CD8-positive, alpha-beta T cell (primary cell): ENCODE measurements at regions of chr19 and their contacts with region 1.

Region 1: GRCh38 chr19:10644260-10645007 is 9.7 kb upstream of the ILF3 start:
- DNase-seq: peak; percentile 76 to 92 (median 87)
- ATAC-seq: peak; percentile 90
- H3K4me3 ChIP-seq: no peak overlapping the region
- H3K4me3 Mint-ChIP-seq: peak overlapping the region; percentile 22
- H3K27ac ChIP-seq: peak overlapping the region in 1 of 2 experiments; percentile 65
- H3K27ac Mint-ChIP-seq: peak overlapping the region; percentile 92
- H3K4me1 ChIP-seq: peaks cover 39% of the 10 kb centered on the region
- H3K4me1 Mint-ChIP-seq: peaks cover 43% of the 10 kb centered on the region
- H3K27me3 ChIP-seq: no peaks in the 10 kb centered on the region
- H3K27me3 Mint-ChIP-seq: no peaks in the 10 kb centered on the region
- CTCF ChIP-seq: peak; percentile 84

Region 2: DNA sequence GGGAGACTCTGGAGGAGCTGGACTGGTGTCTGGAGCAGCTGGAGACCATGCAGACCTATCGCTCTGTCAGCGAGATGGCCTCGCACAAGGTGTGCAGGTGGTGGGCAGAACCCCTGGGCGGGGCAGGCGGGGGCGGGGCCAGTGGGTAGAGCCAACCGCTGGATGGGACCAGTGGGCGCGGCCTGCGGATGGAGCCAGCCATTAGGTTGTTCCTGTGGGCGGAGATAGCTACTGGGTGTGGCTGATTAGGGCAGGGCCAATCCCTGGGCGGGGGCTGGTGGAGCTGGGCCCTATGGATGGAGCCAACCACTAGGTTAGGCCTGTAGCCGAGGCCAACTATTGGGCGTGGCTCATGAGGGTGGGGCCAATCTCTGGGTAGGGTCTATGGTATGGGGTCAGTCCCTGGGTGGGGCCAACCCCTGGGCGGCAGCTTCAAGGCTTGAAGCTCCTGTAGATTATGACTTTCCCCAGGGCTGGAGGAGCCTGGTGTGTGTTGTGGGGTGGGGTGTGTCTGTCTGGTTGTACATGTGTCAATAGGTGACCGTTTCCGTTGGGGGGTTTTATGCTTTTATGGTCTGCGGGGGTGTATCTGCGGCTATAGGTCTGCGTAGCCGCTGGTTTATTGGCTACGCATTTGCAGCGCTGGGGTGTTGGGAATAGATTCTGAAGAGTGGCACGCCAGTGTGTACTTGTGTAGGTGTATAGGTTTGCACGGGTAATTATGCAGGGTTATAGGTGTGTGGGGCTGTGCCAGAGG is 193.4 kb before region 1 on chr19:
- CTCF ChIA-PET with region 1: no interaction called
- POLR2A ChIA-PET with region 1: no interaction called
- intact Hi-C with region 1: no loop called
- DNase-seq: no peak
- ATAC-seq: no peak
- H3K4me3 ChIP-seq: no peak overlapping the region
- H3K4me3 Mint-ChIP-seq: no peak overlapping the region
- H3K27ac ChIP-seq: no peak overlapping the region
- H3K27ac Mint-ChIP-seq: no peak overlapping the region
- H3K4me1 ChIP-seq: no peaks in the 10 kb centered on the region
- H3K4me1 Mint-ChIP-seq: no peaks in the 10 kb centered on the region
- H3K27me3 ChIP-seq: no peaks in the 10 kb centered on the region
- H3K27me3 Mint-ChIP-seq: peaks cover 4% of the 10 kb centered on the region
- CTCF ChIP-seq: no peak

Region 3: DNA sequence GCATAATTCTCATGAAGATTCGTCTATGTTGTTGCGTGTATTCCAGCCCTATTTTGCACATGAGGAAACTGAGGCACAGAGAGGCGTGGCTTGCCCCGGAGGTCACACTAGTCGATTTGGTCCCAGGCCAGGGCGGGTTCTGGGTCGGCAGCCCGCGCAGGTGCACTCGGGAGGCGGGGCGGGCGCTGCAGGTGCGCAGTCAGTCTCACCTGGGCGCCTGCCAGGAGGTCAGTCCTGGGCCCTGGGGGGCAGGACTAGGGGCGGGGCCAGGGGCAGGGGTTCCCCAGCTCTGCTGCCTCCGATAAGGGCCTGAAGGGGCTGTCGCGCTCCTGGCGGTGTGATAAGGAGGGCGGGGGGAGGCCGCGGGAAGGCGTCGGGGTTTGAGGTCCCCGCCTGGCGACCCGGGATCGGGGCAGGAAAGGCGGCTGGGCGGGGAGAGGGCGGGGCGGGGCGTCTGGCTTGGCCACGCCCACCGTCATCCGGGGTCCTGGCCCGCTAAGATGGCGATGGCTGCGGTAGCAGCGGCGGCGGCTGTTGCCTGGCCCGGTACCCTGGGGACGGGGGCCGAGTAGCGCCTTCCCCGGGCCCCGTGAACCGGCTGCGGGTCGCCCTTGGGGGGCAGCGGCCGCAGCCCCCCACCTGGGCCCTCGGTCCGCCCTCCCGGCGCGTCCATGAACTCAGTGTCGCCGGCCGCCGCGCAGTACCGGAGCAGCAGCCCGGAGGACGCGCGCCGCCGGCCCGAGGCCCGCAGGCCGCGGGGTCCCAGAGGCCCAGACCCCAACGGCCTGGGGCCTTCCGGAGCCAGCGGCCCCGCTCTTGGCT is 100.8 kb before region 1 on chr19 and contains the start of gene ATG4D:
- CTCF ChIA-PET with region 1: interaction called, 16 read pairs
- POLR2A ChIA-PET with region 1: interaction called, 3 read pairs
- intact Hi-C with region 1: loop called in 1 of 2 experiments (anchors 1 kb)
- DNase-seq: peak; percentile 66 to 91 (median 84)
- ATAC-seq: peak; percentile 86
- H3K4me3 ChIP-seq: peak within 1 kb of the TSS; percentile 82 to 90
- H3K4me3 Mint-ChIP-seq: peak within 1 kb of the TSS; percentile 88
- H3K27ac ChIP-seq: peak within 1 kb of the TSS; percentile 63 to 66
- H3K27ac Mint-ChIP-seq: peak within 1 kb of the TSS; percentile 91
- H3K4me1 ChIP-seq: peaks cover 17% of the 10 kb centered on the region
- H3K4me1 Mint-ChIP-seq: peaks cover 19% of the 10 kb centered on the region
- H3K27me3 ChIP-seq: no peaks in the 10 kb centered on the region
- H3K27me3 Mint-ChIP-seq: peaks cover 7% of the 10 kb centered on the region
- CTCF ChIP-seq: no peak
- total RNA-seq, gene ATG4D: 82.0 to 91.1 TPM

Region 4: GRCh38 chr19:10602330-10603083 is 41.9 kb before region 1 on chr19:
- CTCF ChIA-PET with region 1: interaction called, 37 read pairs
- POLR2A ChIA-PET with region 1: interaction called, 63 read pairs
- intact Hi-C with region 1: loop called (anchors 2 to 5 kb)
- DNase-seq: peak; percentile 79 to 94 (median 86)
- ATAC-seq: peak; percentile 82
- H3K4me3 ChIP-seq: peak overlapping the region; percentile 91 to 99
- H3K4me3 Mint-ChIP-seq: peak overlapping the region; percentile 96
- H3K27ac ChIP-seq: peak overlapping the region; percentile 99 to 100
- H3K27ac Mint-ChIP-seq: peak overlapping the region; percentile 99
- H3K4me1 ChIP-seq: peaks cover 38% of the 10 kb centered on the region
- H3K4me1 Mint-ChIP-seq: peaks cover 29% of the 10 kb centered on the region
- H3K27me3 ChIP-seq: no peaks in the 10 kb centered on the region
- H3K27me3 Mint-ChIP-seq: no peaks in the 10 kb centered on the region
- CTCF ChIP-seq: no peak

Region 5: DNA sequence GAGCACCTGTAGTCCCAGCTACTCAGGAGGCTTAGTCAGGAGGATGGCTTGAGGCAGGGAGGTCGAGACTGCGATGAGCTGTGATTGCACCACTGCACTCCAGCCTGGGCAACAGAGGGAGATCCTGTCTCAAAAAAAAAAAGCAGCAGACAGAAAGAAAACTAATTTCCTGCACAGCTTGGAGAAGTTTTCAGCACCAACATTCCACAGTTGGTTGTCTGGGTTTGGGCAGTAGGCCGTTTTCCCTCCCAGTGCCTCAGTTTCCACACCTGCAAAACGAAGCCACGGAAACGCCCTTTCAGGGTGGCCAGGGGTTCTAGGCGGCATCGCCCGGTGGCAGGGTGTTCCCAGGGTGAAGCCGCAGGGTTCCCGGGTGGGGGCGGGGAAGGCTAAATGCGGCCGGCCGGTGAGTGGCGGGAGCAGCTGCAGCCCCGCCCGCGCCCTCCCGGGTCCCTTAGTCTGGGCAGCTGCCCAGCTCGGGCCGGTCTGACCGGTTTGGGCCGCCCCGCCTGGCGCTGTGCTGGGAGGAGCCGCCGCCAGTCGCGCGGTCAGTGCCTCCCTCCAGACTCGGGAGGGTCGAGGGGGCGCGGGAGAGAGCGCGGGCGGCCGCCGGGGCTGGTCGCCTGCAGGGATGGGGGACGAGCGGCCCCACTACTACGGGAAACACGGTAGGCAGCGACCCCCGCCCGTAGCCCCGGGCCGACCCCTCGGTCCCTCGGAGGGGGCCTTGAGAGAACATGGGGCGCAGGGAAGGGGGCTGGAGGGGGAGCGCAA is 19.2 kb before region 1 on chr19 and contains the start of gene SLC44A2:
- CTCF ChIA-PET with region 1: interaction called, 24 read pairs
- POLR2A ChIA-PET with region 1: interaction called, 6 read pairs
- intact Hi-C with region 1: no loop called
- DNase-seq: no peak
- ATAC-seq: no peak
- H3K4me3 ChIP-seq: no peak within 1 kb of the TSS
- H3K4me3 Mint-ChIP-seq: peak within 1 kb of the TSS; percentile 35
- H3K27ac ChIP-seq: peak within 1 kb of the TSS; percentile 24 to 58
- H3K27ac Mint-ChIP-seq: peak within 1 kb of the TSS; percentile 77
- H3K4me1 ChIP-seq: peaks cover 31% of the 10 kb centered on the region
- H3K4me1 Mint-ChIP-seq: peaks cover 40% of the 10 kb centered on the region
- H3K27me3 ChIP-seq: no peaks in the 10 kb centered on the region
- H3K27me3 Mint-ChIP-seq: no peaks in the 10 kb centered on the region
- CTCF ChIP-seq: no peak
- total RNA-seq, gene SLC44A2: 175 to 181 TPM

Region 6: GRCh38 chr19:10812902-10813404 is 168.5 kb after region 1 on chr19:
- CTCF ChIA-PET with region 1: no interaction called
- POLR2A ChIA-PET with region 1: no interaction called
- intact Hi-C with region 1: no loop called
- DNase-seq: peak in 4 of 9 experiments; percentile 19 to 73 (median 41)
- ATAC-seq: peak; percentile 35
- H3K4me3 ChIP-seq: no peak overlapping the region
- H3K4me3 Mint-ChIP-seq: no peak overlapping the region
- H3K27ac ChIP-seq: peak overlapping the region in 1 of 2 experiments; percentile 56
- H3K27ac Mint-ChIP-seq: peak overlapping the region; percentile 52
- H3K4me1 ChIP-seq: peaks cover 12% of the 10 kb centered on the region
- H3K4me1 Mint-ChIP-seq: peaks cover 20% of the 10 kb centered on the region
- H3K27me3 ChIP-seq: no peaks in the 10 kb centered on the region
- H3K27me3 Mint-ChIP-seq: no peaks in the 10 kb centered on the region
- CTCF ChIP-seq: no peak